CD4-positive, alpha-beta T cell (primary cell): ENCODE measurements at regions of chr2 and their contacts with region 1.

Region 1: GRCh38 chr2:101419096-101419663 is 31.9 kb upstream of the CREG2 start:
- DNase-seq: peak; percentile 18 to 83 (median 49)
- ATAC-seq: peak; percentile 76
- H3K4me3 ChIP-seq: no peak overlapping the region
- H3K4me3 Mint-ChIP-seq: no peak overlapping the region
- H3K27ac ChIP-seq: no peak overlapping the region
- H3K27ac Mint-ChIP-seq: no peak overlapping the region
- H3K4me1 ChIP-seq: no peaks in the 10 kb centered on the region
- H3K4me1 Mint-ChIP-seq: peaks cover 6% of the 10 kb centered on the region
- H3K27me3 ChIP-seq: no peaks in the 10 kb centered on the region
- H3K27me3 Mint-ChIP-seq: no peaks in the 10 kb centered on the region
- CTCF ChIP-seq: peak; percentile 74

Region 2: DNA sequence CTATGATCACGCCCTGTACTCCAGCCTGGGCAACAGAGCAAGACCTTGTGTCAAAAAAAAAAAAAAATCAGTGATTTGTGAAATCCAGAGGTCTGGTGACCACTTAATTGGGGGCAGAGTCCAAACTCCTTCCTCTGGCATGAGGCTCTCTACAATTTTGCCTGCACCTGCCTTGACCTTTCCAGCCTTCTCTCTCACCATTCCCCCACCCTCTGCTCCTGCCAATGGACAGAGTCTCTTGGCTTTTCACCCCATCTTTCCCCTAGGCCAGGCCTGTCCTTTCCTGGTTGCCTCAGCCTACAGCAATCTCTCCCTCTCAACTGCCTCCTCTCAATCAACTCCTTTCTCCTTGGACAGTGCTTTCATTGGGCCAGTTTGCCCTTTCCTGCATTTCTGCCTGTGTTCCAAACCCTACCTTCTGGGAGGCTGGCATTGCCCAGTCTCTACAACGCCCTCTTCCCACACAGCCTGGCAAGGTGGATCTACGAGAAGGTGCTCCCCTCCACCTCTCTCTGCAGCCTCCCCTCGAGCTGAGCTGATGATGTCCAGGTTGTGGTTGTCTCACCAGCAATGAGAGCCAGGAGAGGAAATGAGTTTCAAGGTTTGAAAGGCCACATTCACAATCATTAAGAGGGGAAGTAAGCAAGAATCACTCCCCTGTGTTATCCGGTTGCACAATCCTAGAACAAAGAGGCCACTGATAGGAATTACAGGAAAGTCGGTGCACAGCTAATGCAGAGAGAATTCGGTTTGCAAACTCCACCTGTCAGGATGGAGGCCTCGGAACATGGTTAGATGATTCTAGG is 638.8 kb before region 1 on chr2:
- CTCF ChIA-PET with region 1: no interaction called
- POLR2A ChIA-PET with region 1: no interaction called
- intact Hi-C with region 1: no loop called
- DNase-seq: no peak
- ATAC-seq: no peak
- H3K4me3 ChIP-seq: no peak overlapping the region
- H3K4me3 Mint-ChIP-seq: no peak overlapping the region
- H3K27ac ChIP-seq: no peak overlapping the region
- H3K27ac Mint-ChIP-seq: no peak overlapping the region
- H3K4me1 ChIP-seq: no peaks in the 10 kb centered on the region
- H3K4me1 Mint-ChIP-seq: no peaks in the 10 kb centered on the region
- H3K27me3 ChIP-seq: no peaks in the 10 kb centered on the region
- H3K27me3 Mint-ChIP-seq: no peaks in the 10 kb centered on the region
- CTCF ChIP-seq: no peak

Region 3: DNA sequence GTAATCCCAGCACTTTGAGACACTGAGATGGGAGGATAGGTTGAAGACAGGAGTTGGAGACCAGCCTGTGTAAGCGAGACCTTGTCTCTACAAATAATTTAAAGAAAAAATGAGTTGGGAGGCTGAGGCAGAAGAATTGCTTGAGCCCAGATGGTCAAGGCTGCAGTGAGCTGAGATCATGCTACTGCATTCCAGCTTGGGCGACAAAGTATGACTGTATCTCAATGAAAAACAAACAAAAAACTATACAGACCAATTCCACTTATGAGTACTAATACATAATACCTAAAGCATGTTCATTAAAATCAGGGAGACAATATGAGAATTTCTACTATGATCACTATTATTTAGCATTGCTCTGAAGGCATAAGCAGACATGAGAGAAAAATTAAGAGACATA is 123.3 kb before region 1 on chr2:
- CTCF ChIA-PET with region 1: no interaction called
- POLR2A ChIA-PET with region 1: no interaction called
- intact Hi-C with region 1: no loop called
- DNase-seq: no peak
- ATAC-seq: no peak
- H3K4me3 ChIP-seq: no peak overlapping the region
- H3K4me3 Mint-ChIP-seq: no peak overlapping the region
- H3K27ac ChIP-seq: no peak overlapping the region
- H3K27ac Mint-ChIP-seq: no peak overlapping the region
- H3K4me1 ChIP-seq: peaks cover 47% of the 10 kb centered on the region
- H3K4me1 Mint-ChIP-seq: peaks cover 82% of the 10 kb centered on the region
- H3K27me3 ChIP-seq: no peaks in the 10 kb centered on the region
- H3K27me3 Mint-ChIP-seq: no peaks in the 10 kb centered on the region
- CTCF ChIP-seq: no peak

Region 4: GRCh38 chr2:101387151-101387807 is 31.9 kb before region 1 on chr2 and contains the start of gene CREG2:
- CTCF ChIA-PET with region 1: no interaction called
- POLR2A ChIA-PET with region 1: no interaction called
- intact Hi-C with region 1: loop called in 1 of 2 experiments (anchors 1 kb)
- DNase-seq: peak; percentile 27 to 80 (median 49)
- ATAC-seq: peak; percentile 93
- H3K4me3 ChIP-seq: peak within 1 kb of the TSS; percentile 44
- H3K4me3 Mint-ChIP-seq: peak within 1 kb of the TSS; percentile 79
- H3K27ac ChIP-seq: no peak within 1 kb of the TSS
- H3K27ac Mint-ChIP-seq: no peak within 1 kb of the TSS
- H3K4me1 ChIP-seq: peaks cover 13% of the 10 kb centered on the region
- H3K4me1 Mint-ChIP-seq: peaks cover 11% of the 10 kb centered on the region
- H3K27me3 ChIP-seq: peaks cover 20 to 38% of the 10 kb centered on the region in 2 experiments
- H3K27me3 Mint-ChIP-seq: peaks cover 61% of the 10 kb centered on the region
- CTCF ChIP-seq: peak; percentile 56
- total RNA-seq, gene CREG2: 0.03 TPM in 1 of 2 experiments, not detected in the other

Region 5: DNA sequence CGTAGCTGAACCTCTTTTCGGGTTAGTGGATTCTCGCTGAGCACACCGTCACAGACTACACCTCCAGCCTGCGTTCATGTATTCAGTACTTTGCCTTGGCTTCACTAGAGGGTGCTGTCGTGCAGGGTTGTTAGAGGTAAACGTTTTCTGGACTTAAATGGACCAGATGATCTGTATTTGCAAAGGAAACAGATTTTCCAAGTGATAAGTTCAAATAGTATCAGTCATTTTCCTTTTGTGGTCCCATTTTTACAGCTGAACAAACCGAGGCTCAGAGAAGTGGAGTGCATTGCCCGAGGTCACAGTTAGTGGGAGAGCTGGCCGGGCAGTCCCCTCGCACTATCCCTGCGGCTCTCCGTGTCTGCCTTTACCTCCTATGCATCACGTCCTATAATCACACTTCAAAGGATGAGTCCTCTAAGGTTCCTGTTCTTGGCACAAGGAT is 404.2 kb after region 1 on chr2:
- CTCF ChIA-PET with region 1: interaction called, 10 read pairs
- POLR2A ChIA-PET with region 1: interaction called, 10 read pairs
- intact Hi-C with region 1: no loop called
- DNase-seq: peak; percentile 48 to 85 (median 65)
- ATAC-seq: peak; percentile 89
- H3K4me3 ChIP-seq: no peak overlapping the region
- H3K4me3 Mint-ChIP-seq: peak overlapping the region; percentile 12
- H3K27ac ChIP-seq: peak overlapping the region in 1 of 2 donors; percentile 38
- H3K27ac Mint-ChIP-seq: peak overlapping the region; percentile 81
- H3K4me1 ChIP-seq: peaks cover 37% of the 10 kb centered on the region
- H3K4me1 Mint-ChIP-seq: peaks cover 76% of the 10 kb centered on the region
- H3K27me3 ChIP-seq: no peaks in the 10 kb centered on the region
- H3K27me3 Mint-ChIP-seq: no peaks in the 10 kb centered on the region
- CTCF ChIP-seq: peak; percentile 88

Region 6: GRCh38 chr2:102005989-102006885 is 587.1 kb after region 1 on chr2:
- CTCF ChIA-PET with region 1: no interaction called
- POLR2A ChIA-PET with region 1: no interaction called
- intact Hi-C with region 1: loop called in 1 of 2 experiments (anchors 10 kb)
- DNase-seq: peak in 7 of 14 experiments; percentile 9 to 68 (median 41)
- ATAC-seq: peak; percentile 51
- H3K4me3 ChIP-seq: no peak overlapping the region
- H3K4me3 Mint-ChIP-seq: no peak overlapping the region
- H3K27ac ChIP-seq: no peak overlapping the region
- H3K27ac Mint-ChIP-seq: no peak overlapping the region
- H3K4me1 ChIP-seq: peaks cover 15% of the 10 kb centered on the region
- H3K4me1 Mint-ChIP-seq: no peaks in the 10 kb centered on the region
- H3K27me3 ChIP-seq: no peaks in the 10 kb centered on the region
- H3K27me3 Mint-ChIP-seq: no peaks in the 10 kb centered on the region
- CTCF ChIP-seq: peak; percentile 63

Region 7: GRCh38 chr2:102442967-102443828 is 1024.0 kb after region 1 on chr2:
- CTCF ChIA-PET with region 1: no interaction called
- POLR2A ChIA-PET with region 1: no interaction called
- intact Hi-C with region 1: loop called in 1 of 2 experiments (anchors 10 kb)
- DNase-seq: peak in 13 of 14 experiments; percentile 11 to 75 (median 29)
- ATAC-seq: peak; percentile 78
- H3K4me3 ChIP-seq: no peak overlapping the region
- H3K4me3 Mint-ChIP-seq: no peak overlapping the region
- H3K27ac ChIP-seq: no peak overlapping the region
- H3K27ac Mint-ChIP-seq: no peak overlapping the region
- H3K4me1 ChIP-seq: no peaks in the 10 kb centered on the region
- H3K4me1 Mint-ChIP-seq: peaks cover 7% of the 10 kb centered on the region
- H3K27me3 ChIP-seq: no peaks in the 10 kb centered on the region
- H3K27me3 Mint-ChIP-seq: no peaks in the 10 kb centered on the region
- CTCF ChIP-seq: peak; percentile 84